ENCODE measurements at regions of chr12 and their contacts with region 1.

Region 1: GRCh38 chr12:117874842-117875434 is 93.9 kb downstream of the KSR2 start:
- DNase-seq: peak; percentile 5 to 64 (median 53)
- ATAC-seq: peak; percentile 68
- H3K4me3 ChIP-seq: no peak overlapping the region
- H3K4me3 Mint-ChIP-seq: no peak overlapping the region
- H3K27ac ChIP-seq: no peak overlapping the region
- H3K27ac Mint-ChIP-seq: no peak overlapping the region
- H3K4me1 ChIP-seq: no peaks in the 10 kb centered on the region
- H3K4me1 Mint-ChIP-seq: peaks cover 7% of the 10 kb centered on the region
- H3K27me3 ChIP-seq: no peaks in the 10 kb centered on the region
- H3K27me3 Mint-ChIP-seq: peaks cover 24% of the 10 kb centered on the region
- CTCF ChIP-seq: peak; percentile 69

Region 2: GRCh38 chr12:117857632-117858612 is 17.0 kb before region 1 on chr12:
- CTCF ChIA-PET with region 1: interaction called, 12 read pairs
- POLR2A ChIA-PET with region 1: no interaction called
- intact Hi-C with region 1: no loop called
- DNase-seq: peak in 6 of 9 experiments; percentile 15 to 54 (median 44)
- ATAC-seq: no peak
- H3K4me3 ChIP-seq: no peak overlapping the region
- H3K4me3 Mint-ChIP-seq: no peak overlapping the region
- H3K27ac ChIP-seq: no peak overlapping the region
- H3K27ac Mint-ChIP-seq: no peak overlapping the region
- H3K4me1 ChIP-seq: no peaks in the 10 kb centered on the region
- H3K4me1 Mint-ChIP-seq: no peaks in the 10 kb centered on the region
- H3K27me3 ChIP-seq: no peaks in the 10 kb centered on the region
- H3K27me3 Mint-ChIP-seq: peaks cover under 1% of the 10 kb centered on the region
- CTCF ChIP-seq: peak; percentile 63

Region 3: GRCh38 chr12:118035246-118036041 is 160.5 kb after region 1 on chr12:
- CTCF ChIA-PET with region 1: interaction called, 5 read pairs
- POLR2A ChIA-PET with region 1: no interaction called
- intact Hi-C with region 1: loop called in 1 of 2 experiments (anchors 10 kb)
- DNase-seq: no peak
- ATAC-seq: no peak
- H3K4me3 ChIP-seq: no peak overlapping the region
- H3K4me3 Mint-ChIP-seq: no peak overlapping the region
- H3K27ac ChIP-seq: no peak overlapping the region
- H3K27ac Mint-ChIP-seq: no peak overlapping the region
- H3K4me1 ChIP-seq: no peaks in the 10 kb centered on the region
- H3K4me1 Mint-ChIP-seq: no peaks in the 10 kb centered on the region
- H3K27me3 ChIP-seq: no peaks in the 10 kb centered on the region
- H3K27me3 Mint-ChIP-seq: no peaks in the 10 kb centered on the region
- CTCF ChIP-seq: no peak

Region 4: DNA sequence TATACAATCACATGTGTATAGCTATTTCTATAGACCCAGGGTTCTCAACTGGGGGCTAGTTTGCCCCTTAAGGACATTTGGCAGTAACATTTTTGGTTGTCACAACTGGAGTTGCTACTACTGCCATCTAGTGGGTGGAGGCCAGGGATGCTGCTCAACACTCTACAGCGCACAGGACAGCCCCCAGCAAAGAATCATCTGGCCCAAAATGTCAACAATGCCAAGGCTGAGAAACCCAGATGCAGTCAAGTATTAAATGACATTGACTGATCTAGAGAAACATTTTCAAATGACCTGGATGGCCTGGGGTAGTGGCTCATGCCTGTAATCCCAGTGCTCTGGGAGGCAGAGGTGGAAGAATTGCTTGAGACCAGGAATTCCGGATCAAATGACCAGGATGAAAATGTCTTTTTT is 180.2 kb after region 1 on chr12:
- CTCF ChIA-PET with region 1: interaction called, 3 read pairs
- POLR2A ChIA-PET with region 1: no interaction called
- intact Hi-C with region 1: loop called in 1 of 2 experiments (anchors 10 kb)
- DNase-seq: peak; percentile 42 to 84 (median 68)
- ATAC-seq: peak; percentile 76
- H3K4me3 ChIP-seq: no peak overlapping the region
- H3K4me3 Mint-ChIP-seq: no peak overlapping the region
- H3K27ac ChIP-seq: peak overlapping the region in 1 of 2 experiments; percentile 38
- H3K27ac Mint-ChIP-seq: peak overlapping the region; percentile 70
- H3K4me1 ChIP-seq: peaks cover 14% of the 10 kb centered on the region
- H3K4me1 Mint-ChIP-seq: peaks cover 40% of the 10 kb centered on the region
- H3K27me3 ChIP-seq: no peaks in the 10 kb centered on the region
- H3K27me3 Mint-ChIP-seq: no peaks in the 10 kb centered on the region
- CTCF ChIP-seq: peak; percentile 53

Region 5: DNA sequence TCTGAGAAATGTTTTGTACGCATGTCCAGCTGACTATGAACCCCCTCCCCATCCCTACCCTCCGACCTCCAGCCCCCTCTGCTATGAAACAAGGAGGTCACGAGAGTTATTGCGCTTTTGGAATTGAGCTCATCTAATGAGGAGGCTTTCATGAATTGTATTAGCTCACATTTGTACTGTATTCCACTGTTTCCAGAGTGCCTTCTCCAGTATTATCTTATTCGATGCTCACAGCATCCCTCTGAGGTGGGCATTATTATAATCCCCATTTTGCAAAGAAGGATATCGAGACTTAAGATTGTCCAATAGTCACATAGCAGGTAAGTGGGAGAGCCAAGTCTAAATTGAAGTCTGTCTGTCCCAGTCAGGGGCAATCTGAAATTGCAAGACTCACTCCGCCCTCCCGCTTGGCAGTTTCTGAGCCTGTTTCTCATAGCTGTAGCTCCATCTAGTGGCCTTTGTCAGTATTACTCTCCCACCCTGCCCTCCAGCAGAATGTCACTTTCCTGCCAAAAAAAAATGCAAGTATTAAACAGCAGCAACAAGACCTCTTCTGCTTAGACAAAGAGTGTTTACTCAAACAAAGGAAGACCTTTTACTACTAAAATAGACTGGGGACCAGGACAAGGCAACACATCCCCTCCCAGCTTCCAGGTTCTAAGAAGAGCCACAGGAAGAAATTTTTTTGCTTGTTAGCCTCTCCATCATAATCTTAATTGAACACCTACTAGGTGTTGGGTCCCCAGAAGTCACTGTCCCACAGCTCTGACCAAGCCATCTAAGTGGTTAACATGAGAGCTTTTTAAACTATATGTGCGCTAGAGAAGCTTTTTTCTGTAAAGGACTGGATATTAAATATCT is 1670.1 kb after region 1 on chr12:
- CTCF ChIA-PET with region 1: interaction called, 4 read pairs
- POLR2A ChIA-PET with region 1: no interaction called
- intact Hi-C with region 1: loop called in 1 of 2 experiments (anchors 10 kb)
- DNase-seq: peak; percentile 18 to 68 (median 52)
- ATAC-seq: peak; percentile 52
- H3K4me3 ChIP-seq: no peak overlapping the region
- H3K4me3 Mint-ChIP-seq: no peak overlapping the region
- H3K27ac ChIP-seq: no peak overlapping the region
- H3K27ac Mint-ChIP-seq: no peak overlapping the region
- H3K4me1 ChIP-seq: no peaks in the 10 kb centered on the region
- H3K4me1 Mint-ChIP-seq: no peaks in the 10 kb centered on the region
- H3K27me3 ChIP-seq: peaks cover 0 to 2% of the 10 kb centered on the region in 2 experiments
- H3K27me3 Mint-ChIP-seq: peaks cover 41% of the 10 kb centered on the region
- CTCF ChIP-seq: peak; percentile 84

Measured in CD8-positive, alpha-beta T cell (primary cell).